ENCODE measurements at regions of chr16 and their contacts with region 1.

Region 1: DNA sequence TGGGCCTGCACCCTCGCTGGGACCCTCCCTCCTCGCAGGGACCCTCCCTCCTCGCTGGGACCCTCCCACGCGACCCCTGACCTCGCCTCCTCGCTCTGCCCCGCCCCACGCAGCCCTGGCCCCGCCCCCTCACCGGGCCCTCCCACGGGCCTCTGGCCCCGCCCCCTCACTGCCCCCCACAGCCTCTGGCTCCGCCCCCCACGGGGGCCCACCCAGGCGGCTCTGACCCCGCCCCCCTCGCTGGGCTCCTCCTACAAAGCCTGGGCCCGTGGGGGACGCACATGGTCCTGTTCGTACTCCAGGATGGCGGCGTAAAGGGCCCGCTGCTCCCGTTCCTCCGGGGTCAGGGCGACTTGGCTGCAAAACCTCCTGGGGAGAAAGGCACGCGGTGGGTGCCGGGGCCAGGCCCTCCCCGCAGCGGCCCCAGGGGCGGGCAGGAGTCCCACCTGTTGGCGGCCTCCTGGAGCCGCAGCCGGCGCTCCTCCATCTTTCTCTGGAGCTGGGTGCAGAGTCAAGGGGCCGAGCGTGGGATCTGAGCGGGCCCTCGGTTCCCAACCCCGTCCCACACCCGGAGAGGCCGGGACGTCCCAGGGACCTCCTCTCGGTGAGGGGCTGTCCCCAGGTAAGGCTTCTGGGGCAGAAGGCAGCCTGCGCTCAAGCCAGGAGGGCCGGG is 9.0 kb downstream of the VPS9D1 start:
- DNase-seq: peak; percentile 87
- ATAC-seq: peak; percentile 92
- H3K4me3 Mint-ChIP-seq: peak overlapping the region; percentile 68
- H3K27ac Mint-ChIP-seq: no peak overlapping the region
- H3K4me1 Mint-ChIP-seq: peaks cover 13% of the 10 kb centered on the region
- H3K27me3 Mint-ChIP-seq: no peaks in the 10 kb centered on the region

Region 2: GRCh38 chr16:89795676-89796075 is 83.9 kb after region 1 on chr16:
- CTCF ChIA-PET with region 1: interaction called, 100 read pairs
- DNase-seq: no peak
- ATAC-seq: no peak
- H3K4me3 Mint-ChIP-seq: no peak overlapping the region
- H3K27ac Mint-ChIP-seq: no peak overlapping the region
- H3K4me1 Mint-ChIP-seq: peaks cover 3% of the 10 kb centered on the region
- H3K27me3 Mint-ChIP-seq: no peaks in the 10 kb centered on the region

Region 3: DNA sequence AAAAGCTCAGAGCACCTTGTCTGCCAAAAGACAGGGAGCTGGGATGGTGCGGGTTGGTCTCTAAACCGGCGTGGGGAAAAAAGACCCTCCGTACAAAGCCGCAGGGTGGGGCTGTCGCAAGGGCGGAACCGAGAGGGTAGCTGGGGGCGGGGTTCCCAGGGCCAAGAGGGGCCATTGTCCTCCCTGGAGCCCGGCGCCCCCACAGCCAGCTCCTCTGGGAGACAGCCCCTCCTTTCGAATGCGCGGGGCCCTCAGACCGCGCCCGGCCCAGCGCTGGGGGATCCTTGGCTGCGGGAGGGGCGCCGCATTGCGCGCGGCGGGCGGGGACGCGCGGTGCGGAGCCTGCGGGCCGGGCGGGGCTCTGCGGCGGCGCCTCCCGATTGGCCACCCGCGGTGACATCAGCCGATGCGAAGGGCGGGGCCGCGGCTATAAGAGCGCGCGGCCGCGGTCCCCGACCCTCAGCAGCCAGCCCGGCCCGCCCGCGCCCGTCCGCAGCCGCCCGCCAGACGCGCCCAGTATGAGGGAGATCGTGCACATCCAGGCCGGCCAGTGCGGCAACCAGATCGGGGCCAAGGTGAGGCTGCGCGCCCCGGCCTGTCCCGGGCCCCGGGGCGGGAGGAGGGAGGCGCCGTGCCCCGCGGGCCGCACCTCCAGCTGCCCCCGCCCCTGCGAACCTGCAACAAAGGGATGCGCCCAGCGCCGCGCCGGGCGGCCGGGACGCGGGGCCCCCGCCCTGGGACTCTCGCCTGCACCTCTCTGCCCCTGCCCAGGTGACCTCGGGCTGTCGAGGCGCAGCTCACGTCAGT is 211.3 kb after region 1 on chr16 and contains the start of gene TUBB3:
- CTCF ChIA-PET with region 1: no interaction called
- DNase-seq: peak; percentile 77
- ATAC-seq: peak; percentile 53
- H3K4me3 Mint-ChIP-seq: peak within 1 kb of the TSS; percentile 74
- H3K27ac Mint-ChIP-seq: peak within 1 kb of the TSS; percentile 80
- H3K4me1 Mint-ChIP-seq: peaks cover 46% of the 10 kb centered on the region
- H3K27me3 Mint-ChIP-seq: peaks cover 45% of the 10 kb centered on the region
- total RNA-seq, gene TUBB3: 3.6 to 5.0 TPM

Measured in activated CD8-positive, alpha-beta memory T cell treated with anti-CD3 and anti-CD28 coated beads, Interleukin-2, amount 10 ng/mL, durations not matched to agents 7 days and 5 days (primary cell).